Activated naive CD4-positive, alpha-beta T cell treated with anti-CD3 and anti-CD28 coated beads for 36 hours (primary cell): ENCODE measurements at regions of chr11 and their contacts with region 1.

Region 1: GRCh38 chr11:102268329-102269193 is 48.7 kb upstream of the BIRC3 start:
- DNase-seq: peak; percentile 91
- H3K4me3 Mint-ChIP-seq: peak overlapping the region; percentile 60
- H3K27ac Mint-ChIP-seq: no peak overlapping the region
- H3K4me1 Mint-ChIP-seq: peaks cover 32% of the 10 kb centered on the region
- H3K27me3 Mint-ChIP-seq: no peaks in the 10 kb centered on the region

Region 2: GRCh38 chr11:101860696-101861427 is 407.7 kb before region 1 on chr11:
- CTCF ChIA-PET with region 1: interaction called, 3 read pairs
- intact Hi-C with region 1: loop called (anchors 2 kb)
- DNase-seq: peak; percentile 37
- H3K4me3 Mint-ChIP-seq: no peak overlapping the region
- H3K27ac Mint-ChIP-seq: no peak overlapping the region
- H3K4me1 Mint-ChIP-seq: no peaks in the 10 kb centered on the region
- H3K27me3 Mint-ChIP-seq: peaks cover 8% of the 10 kb centered on the region

Region 3: DNA sequence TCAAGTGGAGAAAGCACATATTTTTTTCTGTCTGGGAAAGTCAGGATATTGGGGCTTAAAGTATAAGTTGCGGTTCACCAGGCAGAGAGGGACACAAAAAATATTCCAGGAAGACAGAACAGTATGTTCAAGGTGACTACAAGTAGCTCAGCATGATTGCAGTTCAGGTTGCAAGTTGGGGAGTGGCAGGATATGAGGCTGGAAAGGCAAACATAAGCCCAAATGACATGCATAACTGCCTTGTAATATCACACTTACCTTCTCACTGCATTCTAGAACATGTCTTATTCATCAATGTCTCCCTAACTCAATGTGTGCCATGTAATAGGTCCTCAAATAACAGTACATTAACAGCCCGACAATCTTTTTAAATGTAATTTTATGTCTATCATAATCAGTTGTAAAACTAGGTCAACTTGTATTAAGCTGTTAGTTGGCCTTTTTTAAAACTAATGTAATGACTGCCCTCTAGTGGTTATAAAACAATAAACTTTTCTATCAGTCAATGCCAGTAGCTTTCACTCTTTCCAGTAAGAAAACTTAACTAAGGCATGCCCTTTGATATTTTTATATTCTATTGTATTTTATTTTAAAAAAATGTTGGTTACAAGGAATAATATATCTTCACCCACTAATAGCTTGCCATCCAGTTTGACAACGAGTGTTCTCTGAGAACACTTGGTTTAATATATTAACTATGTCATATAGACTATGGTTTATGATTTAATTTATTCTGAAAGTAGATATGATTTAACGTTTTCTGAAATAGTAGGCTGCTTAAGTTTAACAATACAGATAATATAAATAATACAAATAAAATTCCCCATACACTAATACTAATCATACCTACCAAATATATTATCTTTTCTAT is 260.8 kb before region 1 on chr11:
- CTCF ChIA-PET with region 1: interaction called, 3 read pairs
- intact Hi-C with region 1: loop called (anchors 2 kb)
- DNase-seq: no peak
- H3K4me3 Mint-ChIP-seq: no peak overlapping the region
- H3K27ac Mint-ChIP-seq: no peak overlapping the region
- H3K4me1 Mint-ChIP-seq: peaks cover 7% of the 10 kb centered on the region
- H3K27me3 Mint-ChIP-seq: peaks cover 11% of the 10 kb centered on the region

Region 4: GRCh38 chr11:102109896-102110760 is 158.4 kb before region 1 on chr11 and contains the start of gene YAP1:
- CTCF ChIA-PET with region 1: interaction called, 4 read pairs
- intact Hi-C with region 1: loop called (anchors 1 kb)
- DNase-seq: peak; percentile 70
- H3K4me3 Mint-ChIP-seq: peak within 1 kb of the TSS; percentile 94
- H3K27ac Mint-ChIP-seq: no peak within 1 kb of the TSS
- H3K4me1 Mint-ChIP-seq: peaks cover 9% of the 10 kb centered on the region
- H3K27me3 Mint-ChIP-seq: peaks cover 39% of the 10 kb centered on the region
- total RNA-seq, gene YAP1: 1.1 to 1.5 TPM

Region 5: GRCh38 chr11:102293873-102294601 is 25.5 kb after region 1 on chr11:
- CTCF ChIA-PET with region 1: interaction called, 15 read pairs
- intact Hi-C with region 1: loop called (anchors 1 kb)
- DNase-seq: peak; percentile 35
- H3K4me3 Mint-ChIP-seq: peak overlapping the region; percentile 74
- H3K27ac Mint-ChIP-seq: peak overlapping the region; percentile 85
- H3K4me1 Mint-ChIP-seq: peaks cover 21% of the 10 kb centered on the region
- H3K27me3 Mint-ChIP-seq: no peaks in the 10 kb centered on the region

Region 6: GRCh38 chr11:102666331-102666957 is 397.9 kb after region 1 on chr11:
- CTCF ChIA-PET with region 1: interaction called, 5 read pairs
- intact Hi-C with region 1: loop called (anchors 5 kb)
- DNase-seq: peak; percentile 28
- H3K4me3 Mint-ChIP-seq: no peak overlapping the region
- H3K27ac Mint-ChIP-seq: no peak overlapping the region
- H3K4me1 Mint-ChIP-seq: no peaks in the 10 kb centered on the region
- H3K27me3 Mint-ChIP-seq: no peaks in the 10 kb centered on the region